ENCODE measurements at regions of chr6 and their contacts with region 1.

Region 1: GRCh38 chr6:82270881-82271645 is 23.5 kb upstream of the IBTK start:
- DNase-seq: peak; percentile 32
- H3K4me3 ChIP-seq: no peak overlapping the region
- H3K27ac ChIP-seq: no peak overlapping the region
- H3K4me1 ChIP-seq: no peaks in the 10 kb centered on the region
- H3K27me3 ChIP-seq: peaks cover 3 to 4% of the 10 kb centered on the region in 2 experiments
- CTCF ChIP-seq: peak; percentile 27 to 48
- POLR2A ChIP-seq: no peak

Region 2: DNA sequence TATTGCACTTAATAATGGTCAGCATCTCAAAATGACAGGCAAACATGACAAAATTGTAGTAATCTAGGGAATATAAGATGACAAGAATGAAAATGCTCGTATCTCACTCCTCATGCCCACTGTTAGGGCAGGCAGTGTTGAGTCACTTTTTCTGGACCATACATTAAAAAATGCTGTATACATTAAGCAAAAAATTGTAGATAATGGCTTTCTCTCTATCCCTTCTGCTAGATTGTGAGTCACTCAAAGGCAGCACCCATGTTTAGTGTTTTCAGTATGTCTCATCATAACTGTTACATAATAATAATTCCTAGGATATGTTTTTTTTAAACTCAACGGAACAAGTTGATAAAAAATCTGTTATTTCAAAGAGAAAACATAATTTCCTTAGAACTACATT is 717.8 kb before region 1 on chr6:
- CTCF ChIA-PET with region 1: no interaction called
- POLR2A ChIA-PET with region 1: no interaction called
- dilution Hi-C with region 1: no loop called
- intact Hi-C with region 1: no loop called
- DNase-seq: no peak
- H3K4me3 ChIP-seq: no peak overlapping the region
- H3K27ac ChIP-seq: no peak overlapping the region
- H3K4me1 ChIP-seq: no peaks in the 10 kb centered on the region
- H3K27me3 ChIP-seq: no peaks in the 10 kb centered on the region
- CTCF ChIP-seq: no peak
- POLR2A ChIP-seq: no peak

Region 3: DNA sequence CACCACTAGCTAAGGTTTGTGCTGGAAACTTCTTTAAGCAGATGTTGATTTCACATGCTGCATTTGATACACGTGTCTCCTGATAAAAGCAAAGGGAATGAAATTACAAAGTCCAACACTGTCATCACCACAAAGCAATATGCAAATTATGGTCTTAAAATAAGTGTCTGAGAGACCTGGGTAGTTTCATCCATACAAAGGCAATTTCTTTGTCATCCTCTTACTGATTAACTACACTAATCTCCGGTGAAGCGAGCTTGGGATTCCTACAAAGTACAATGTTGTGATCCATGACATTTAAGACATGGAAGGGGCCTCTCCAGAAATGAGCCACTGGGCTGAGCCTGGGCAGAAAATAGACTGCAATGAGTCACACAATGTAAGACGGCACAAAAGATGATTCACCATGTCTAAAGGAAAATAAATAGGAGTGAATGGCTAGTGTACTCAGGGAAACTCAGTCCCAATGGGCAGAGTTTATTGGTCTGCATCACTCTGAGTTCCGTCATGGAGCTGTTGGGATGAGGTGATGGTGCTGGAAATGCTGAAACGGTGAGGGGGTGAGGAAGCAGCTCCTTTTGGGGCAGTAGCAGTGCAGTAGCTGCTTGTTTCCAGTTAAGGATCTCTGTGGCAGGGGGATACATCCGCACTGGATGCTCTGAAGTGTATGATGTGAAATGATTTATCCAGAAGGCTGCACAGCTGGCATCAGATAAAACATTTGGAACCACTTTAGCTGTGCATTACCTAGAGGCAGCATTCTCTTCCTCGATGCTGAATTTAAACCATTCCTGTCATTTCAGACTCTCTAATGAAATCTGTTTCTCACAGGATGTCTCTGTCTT is 126.8 kb before region 1 on chr6:
- CTCF ChIA-PET with region 1: no interaction called
- POLR2A ChIA-PET with region 1: no interaction called
- dilution Hi-C with region 1: no loop called
- intact Hi-C with region 1: no loop called
- DNase-seq: peak; percentile 85
- H3K4me3 ChIP-seq: no peak overlapping the region
- H3K27ac ChIP-seq: peak overlapping the region; percentile 84
- H3K4me1 ChIP-seq: peaks cover 24% of the 10 kb centered on the region
- H3K27me3 ChIP-seq: no peaks in the 10 kb centered on the region
- CTCF ChIP-seq: no peak
- POLR2A ChIP-seq: no peak

Region 4: DNA sequence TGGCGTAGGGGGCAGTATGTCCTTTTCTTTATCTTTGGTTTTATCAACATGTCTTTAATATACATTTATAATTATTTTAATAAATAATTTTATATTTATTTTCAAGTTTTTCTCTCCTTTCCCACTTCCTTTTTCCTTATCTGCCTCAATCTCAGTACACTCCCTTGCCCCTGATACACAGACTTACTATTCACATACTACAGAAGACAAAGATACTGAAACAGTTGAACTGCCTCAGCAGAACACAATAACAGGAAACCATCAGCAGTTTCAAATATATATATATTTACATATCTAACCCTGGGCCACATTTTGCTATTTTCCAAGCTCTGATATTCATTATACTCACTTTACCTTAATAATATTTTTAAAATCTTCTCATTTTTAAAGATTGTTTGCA is 43.3 kb before region 1 on chr6:
- CTCF ChIA-PET with region 1: no interaction called
- POLR2A ChIA-PET with region 1: no interaction called
- dilution Hi-C with region 1: no loop called
- intact Hi-C with region 1: no loop called
- DNase-seq: peak; percentile 16
- H3K4me3 ChIP-seq: no peak overlapping the region
- H3K27ac ChIP-seq: no peak overlapping the region
- H3K4me1 ChIP-seq: peaks cover 9% of the 10 kb centered on the region
- H3K27me3 ChIP-seq: no peaks in the 10 kb centered on the region
- CTCF ChIP-seq: no peak
- POLR2A ChIP-seq: no peak

Region 5: GRCh38 chr6:82441066-82441855 is 170.2 kb after region 1 on chr6:
- CTCF ChIA-PET with region 1: no interaction called
- POLR2A ChIA-PET with region 1: no interaction called
- dilution Hi-C with region 1: no loop called
- intact Hi-C with region 1: no loop called
- DNase-seq: no peak
- H3K4me3 ChIP-seq: no peak overlapping the region
- H3K27ac ChIP-seq: no peak overlapping the region
- H3K4me1 ChIP-seq: no peaks in the 10 kb centered on the region
- H3K27me3 ChIP-seq: no peaks in the 10 kb centered on the region
- CTCF ChIP-seq: no peak
- POLR2A ChIP-seq: no peak

Region 6: GRCh38 chr6:82589509-82590206 is 318.6 kb after region 1 on chr6:
- CTCF ChIA-PET with region 1: no interaction called
- POLR2A ChIA-PET with region 1: no interaction called
- dilution Hi-C with region 1: no loop called
- intact Hi-C with region 1: loop called (anchors 5 kb)
- DNase-seq: peak; percentile 3
- H3K4me3 ChIP-seq: no peak overlapping the region
- H3K27ac ChIP-seq: no peak overlapping the region
- H3K4me1 ChIP-seq: no peaks in the 10 kb centered on the region
- H3K27me3 ChIP-seq: no peaks in the 10 kb centered on the region
- CTCF ChIP-seq: no peak
- POLR2A ChIP-seq: no peak

Region 7: DNA sequence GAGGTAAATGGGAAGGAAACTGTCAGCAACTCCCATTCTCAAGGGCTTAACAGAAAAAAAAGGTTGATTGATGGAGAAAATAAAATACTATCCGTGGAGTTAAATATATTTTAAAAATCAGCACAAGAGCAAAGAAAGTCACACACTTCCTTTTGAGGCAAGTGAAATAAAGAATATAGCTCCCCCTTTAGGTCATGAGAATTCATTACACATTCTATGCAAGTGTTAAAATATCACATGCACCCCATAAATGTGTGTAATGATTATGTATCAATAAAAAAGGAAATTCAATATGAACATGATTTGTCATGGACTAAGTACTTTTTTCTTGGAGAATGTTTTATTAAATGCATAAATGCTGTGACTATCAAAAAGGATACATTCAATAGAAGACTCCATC is 441.8 kb after region 1 on chr6:
- CTCF ChIA-PET with region 1: interaction called, 28 read pairs
- POLR2A ChIA-PET with region 1: no interaction called
- dilution Hi-C with region 1: no loop called
- intact Hi-C with region 1: loop called (anchors 2 kb)
- DNase-seq: no peak
- H3K4me3 ChIP-seq: no peak overlapping the region
- H3K27ac ChIP-seq: no peak overlapping the region
- H3K4me1 ChIP-seq: no peaks in the 10 kb centered on the region
- H3K27me3 ChIP-seq: no peaks in the 10 kb centered on the region
- CTCF ChIP-seq: peak; percentile 20 to 22
- POLR2A ChIP-seq: no peak